ENCODE measurements at regions of chr15 and their contacts with region 1.

Region 1: DNA sequence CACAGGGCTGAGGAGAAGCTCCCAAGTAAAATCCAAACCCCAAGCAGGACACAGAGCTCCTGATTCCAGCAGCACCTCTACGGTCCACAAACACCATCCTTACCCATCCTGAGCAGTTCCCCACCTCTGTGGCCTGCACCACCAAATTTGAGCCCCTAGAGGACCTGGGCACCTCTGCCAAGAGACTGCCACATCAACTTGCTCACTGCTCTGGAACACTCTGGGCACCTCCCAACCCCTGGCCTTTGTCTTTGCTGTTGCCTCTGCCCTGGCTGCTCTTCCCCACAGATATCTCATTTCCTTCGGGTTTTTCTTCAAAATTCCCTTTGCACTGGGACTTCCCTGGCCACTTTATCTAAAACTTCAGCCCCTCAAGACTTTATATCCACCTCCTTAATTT is 5.8 kb downstream of the RLBP1 start:
- DNase-seq: no peak
- H3K4me3 ChIP-seq: no peak overlapping the region
- CTCF ChIP-seq: no peak

Region 2: GRCh38 chr15:89293012-89293411 is 77.4 kb after region 1 on chr15:
- in situ Hi-C with region 1: loop called (anchors 5 kb)
- DNase-seq: no peak
- H3K4me3 ChIP-seq: no peak overlapping the region
- CTCF ChIP-seq: no peak

Measured in astrocyte of the cerebellum (primary cell).